CD8-positive, alpha-beta T cell (primary cell): ENCODE measurements at regions of chr19 and their contacts with region 1.

Region 1: GRCh38 chr19:6516659-6517291 is 14.1 kb upstream of the TNFSF9 start:
- DNase-seq: peak; percentile 80 to 97 (median 91)
- ATAC-seq: peak; percentile 85
- H3K4me3 ChIP-seq: peak overlapping the region; percentile 78
- H3K4me3 Mint-ChIP-seq: peak overlapping the region; percentile 90
- H3K27ac ChIP-seq: peak overlapping the region in 1 of 2 experiments; percentile 52
- H3K27ac Mint-ChIP-seq: peak overlapping the region; percentile 33
- H3K4me1 ChIP-seq: peaks cover 26% of the 10 kb centered on the region
- H3K4me1 Mint-ChIP-seq: peaks cover 31% of the 10 kb centered on the region
- H3K27me3 ChIP-seq: no peaks in the 10 kb centered on the region
- H3K27me3 Mint-ChIP-seq: no peaks in the 10 kb centered on the region
- CTCF ChIP-seq: peak; percentile 85

Region 2: GRCh38 chr19:6424939-6425731 is 91.6 kb before region 1 on chr19:
- CTCF ChIA-PET with region 1: no interaction called
- POLR2A ChIA-PET with region 1: no interaction called
- intact Hi-C with region 1: no loop called
- DNase-seq: peak; percentile 97 to 100 (median 98)
- ATAC-seq: peak; percentile 82
- H3K4me3 ChIP-seq: peak overlapping the region; percentile 7 to 48
- H3K4me3 Mint-ChIP-seq: peak overlapping the region; percentile 78
- H3K27ac ChIP-seq: peak overlapping the region; percentile 39 to 92
- H3K27ac Mint-ChIP-seq: peak overlapping the region; percentile 93
- H3K4me1 ChIP-seq: peaks cover 35% of the 10 kb centered on the region
- H3K4me1 Mint-ChIP-seq: peaks cover 37% of the 10 kb centered on the region
- H3K27me3 ChIP-seq: no peaks in the 10 kb centered on the region
- H3K27me3 Mint-ChIP-seq: no peaks in the 10 kb centered on the region
- CTCF ChIP-seq: no peak

Region 3: DNA sequence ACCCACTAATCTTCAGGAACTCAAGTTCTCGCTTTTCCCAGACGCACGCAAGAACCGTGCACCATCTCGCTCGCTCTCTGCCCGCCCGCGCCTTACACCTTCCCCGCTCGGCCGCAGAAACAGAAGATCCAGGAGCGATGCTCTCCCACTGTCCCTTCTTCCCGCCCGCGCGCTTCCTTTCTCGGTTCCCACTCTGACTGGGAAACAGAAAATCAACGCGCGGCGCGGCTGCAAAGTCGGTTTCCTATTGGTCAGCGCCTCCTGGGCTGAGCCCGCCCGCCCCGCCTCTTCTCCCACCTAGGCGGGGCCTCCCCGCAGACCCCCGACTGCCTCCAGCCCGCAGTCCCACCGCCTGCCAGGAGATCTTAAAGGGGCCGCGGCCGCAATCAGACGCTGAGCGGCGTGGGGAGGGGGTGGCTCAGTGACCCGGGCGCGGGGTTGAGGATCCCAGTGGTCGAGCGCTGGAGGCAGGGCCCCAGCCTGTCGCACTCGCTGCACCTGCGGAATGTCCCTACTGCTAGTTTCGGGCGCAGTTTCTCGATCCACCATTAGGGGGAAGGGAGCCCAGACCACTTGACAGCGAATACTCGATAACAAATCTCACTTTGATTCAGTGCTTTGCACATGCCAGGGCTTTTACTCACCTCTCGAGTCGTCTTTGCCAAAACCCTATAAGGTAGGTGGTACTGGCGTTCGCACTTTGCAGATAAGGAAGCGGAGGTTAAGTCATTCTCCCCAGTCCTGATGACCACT is 56.5 kb before region 1 on chr19:
- CTCF ChIA-PET with region 1: no interaction called
- POLR2A ChIA-PET with region 1: interaction called, 4 read pairs
- intact Hi-C with region 1: loop called in 1 of 2 experiments (anchors 1 kb)
- DNase-seq: peak; percentile 93 to 98 (median 96)
- ATAC-seq: peak; percentile 85
- H3K4me3 ChIP-seq: peak overlapping the region; percentile 73 to 87
- H3K4me3 Mint-ChIP-seq: peak overlapping the region; percentile 94
- H3K27ac ChIP-seq: peak overlapping the region; percentile 62 to 69
- H3K27ac Mint-ChIP-seq: peak overlapping the region; percentile 81
- H3K4me1 ChIP-seq: peaks cover 20% of the 10 kb centered on the region
- H3K4me1 Mint-ChIP-seq: peaks cover 32% of the 10 kb centered on the region
- H3K27me3 ChIP-seq: peaks cover 0 to 3% of the 10 kb centered on the region in 2 experiments
- H3K27me3 Mint-ChIP-seq: no peaks in the 10 kb centered on the region
- CTCF ChIP-seq: peak; percentile 54

Region 4: DNA sequence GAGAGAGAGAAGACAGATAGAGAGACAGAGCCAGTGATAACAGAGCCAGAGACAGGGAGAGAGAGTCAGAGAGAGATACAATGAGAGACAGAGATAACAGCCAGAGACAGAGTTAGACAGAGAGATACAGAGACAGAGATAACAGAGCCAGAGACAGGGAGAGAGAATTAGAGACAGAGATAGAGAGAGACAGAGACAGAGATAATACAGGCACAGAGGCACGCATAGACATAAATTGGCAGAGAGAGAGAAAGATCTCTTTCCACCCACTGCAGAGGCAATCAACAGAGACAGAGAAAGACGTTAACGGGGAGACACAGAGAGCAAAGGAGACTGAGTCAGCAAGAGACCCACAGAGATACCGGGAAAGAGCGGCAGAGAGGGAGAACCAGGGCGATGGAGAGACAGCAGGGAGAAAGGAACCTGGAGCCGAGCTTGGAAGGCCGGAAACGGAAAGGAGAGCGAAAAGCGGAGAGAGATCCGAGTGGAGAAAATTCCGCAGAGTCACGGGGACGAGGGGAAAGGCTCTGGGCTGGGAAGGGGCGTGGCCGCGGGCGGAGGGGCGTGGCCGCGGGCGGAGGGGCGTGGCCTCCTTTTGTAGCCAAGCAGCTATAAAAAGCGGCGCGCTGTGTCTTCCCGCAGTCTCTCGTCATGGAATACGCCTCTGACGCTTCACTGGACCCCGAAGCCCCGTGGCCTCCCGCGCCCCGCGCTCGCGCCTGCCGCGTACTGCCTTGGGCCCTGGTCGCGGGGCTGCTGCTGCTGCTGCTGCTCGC is 13.8 kb after region 1 on chr19 and contains the start of gene TNFSF9:
- CTCF ChIA-PET with region 1: interaction called, 4 read pairs
- POLR2A ChIA-PET with region 1: no interaction called
- intact Hi-C with region 1: loop called in 1 of 2 experiments (anchors 2 kb)
- DNase-seq: peak; percentile 60 to 90 (median 82)
- ATAC-seq: peak; percentile 78
- H3K4me3 ChIP-seq: peak within 1 kb of the TSS; percentile 60 to 67
- H3K4me3 Mint-ChIP-seq: peak within 1 kb of the TSS; percentile 88
- H3K27ac ChIP-seq: peak within 1 kb of the TSS in 1 of 2 experiments; percentile 28
- H3K27ac Mint-ChIP-seq: peak within 1 kb of the TSS; percentile 62
- H3K4me1 ChIP-seq: peaks cover 31% of the 10 kb centered on the region
- H3K4me1 Mint-ChIP-seq: peaks cover 32% of the 10 kb centered on the region
- H3K27me3 ChIP-seq: peaks cover 10 to 16% of the 10 kb centered on the region in 2 experiments
- H3K27me3 Mint-ChIP-seq: peaks cover 23% of the 10 kb centered on the region
- CTCF ChIP-seq: no peak
- total RNA-seq, gene TNFSF9: 18.3 to 19.8 TPM

Region 5: DNA sequence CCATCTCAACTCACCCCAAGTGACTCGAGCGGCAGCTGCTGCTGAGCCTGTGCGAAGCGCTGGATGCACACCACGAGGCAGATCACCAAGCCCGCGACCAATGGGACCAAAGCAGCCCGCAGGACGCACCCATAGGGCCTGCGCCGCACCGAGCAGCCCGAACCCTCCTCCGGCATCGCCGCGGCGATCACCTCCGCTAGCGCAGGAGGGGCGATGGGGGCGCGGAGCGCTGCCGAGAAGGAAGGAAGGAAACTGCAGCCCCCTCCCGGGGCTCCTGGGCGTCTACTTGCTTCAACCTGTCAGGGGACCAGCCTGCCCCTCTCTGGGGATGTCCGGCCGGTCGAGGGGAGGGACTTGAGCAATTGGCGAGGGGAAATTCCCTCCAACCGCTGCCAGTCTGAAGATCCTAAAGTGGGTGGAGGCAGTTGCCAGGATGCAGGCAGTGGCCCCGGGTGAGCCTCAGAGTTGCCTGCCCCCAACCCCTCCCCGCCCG is 74.1 kb after region 1 on chr19 and contains the start of gene CD70:
- CTCF ChIA-PET with region 1: interaction called, 3 read pairs
- POLR2A ChIA-PET with region 1: interaction called, 3 read pairs
- intact Hi-C with region 1: loop called in 1 of 2 experiments (anchors 1 kb)
- DNase-seq: peak; percentile 6 to 84 (median 41)
- ATAC-seq: peak; percentile 62
- H3K4me3 ChIP-seq: peak within 1 kb of the TSS; percentile 35 to 55
- H3K4me3 Mint-ChIP-seq: peak within 1 kb of the TSS; percentile 77
- H3K27ac ChIP-seq: peak within 1 kb of the TSS in 1 of 2 experiments; percentile 31
- H3K27ac Mint-ChIP-seq: no peak within 1 kb of the TSS
- H3K4me1 ChIP-seq: peaks cover 48% of the 10 kb centered on the region
- H3K4me1 Mint-ChIP-seq: peaks cover 53% of the 10 kb centered on the region
- H3K27me3 ChIP-seq: peaks cover 23 to 36% of the 10 kb centered on the region in 2 experiments
- H3K27me3 Mint-ChIP-seq: peaks cover 60% of the 10 kb centered on the region
- CTCF ChIP-seq: no peak
- total RNA-seq, gene CD70: 1.7 to 1.9 TPM

Region 6: DNA sequence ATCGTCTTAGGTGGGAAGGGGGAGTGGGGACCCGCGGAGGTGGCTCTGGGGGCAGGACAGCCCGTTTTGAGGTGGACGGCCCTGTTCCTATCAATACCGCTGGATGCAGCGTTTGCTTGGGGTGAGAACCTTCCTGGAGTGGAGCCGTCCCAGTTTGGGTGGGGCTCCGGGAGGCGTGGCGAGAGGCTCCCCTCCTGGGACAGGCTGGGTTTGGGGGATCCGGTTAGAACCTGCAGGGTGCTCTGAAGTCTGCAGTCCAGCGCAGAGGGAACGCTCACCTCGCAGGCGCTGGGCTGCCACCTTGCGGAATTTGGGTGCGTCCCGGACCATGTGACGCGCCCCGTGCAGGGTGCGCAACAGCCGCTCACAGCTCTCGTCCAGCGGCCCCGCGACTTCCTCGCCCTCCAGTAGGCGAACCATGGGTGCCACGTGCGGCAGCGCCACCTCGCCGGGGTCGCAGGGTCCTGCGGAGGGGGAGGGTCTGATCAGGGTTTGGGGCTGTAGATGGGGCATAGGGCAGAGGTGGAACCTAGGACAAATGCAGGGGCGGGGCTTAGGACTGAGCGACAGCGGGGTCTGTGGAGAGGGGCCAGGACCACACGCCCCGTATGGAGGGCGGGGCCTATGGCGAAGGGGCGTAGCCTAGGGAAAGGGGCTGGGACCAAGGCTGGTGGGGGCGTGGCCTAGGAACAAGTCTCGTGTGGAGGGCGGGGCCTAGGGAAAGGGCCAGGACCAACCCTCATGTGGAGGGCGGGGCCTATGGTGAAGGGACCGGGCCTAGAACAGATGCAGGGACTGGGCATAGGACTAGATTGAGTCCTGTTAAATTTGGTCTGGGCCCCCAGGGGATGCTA is 236.6 kb after region 1 on chr19:
- CTCF ChIA-PET with region 1: interaction called, 4 read pairs
- POLR2A ChIA-PET with region 1: no interaction called
- intact Hi-C with region 1: loop called (anchors 5 kb)
- DNase-seq: peak; percentile 51 to 89 (median 73)
- ATAC-seq: peak; percentile 90
- H3K4me3 ChIP-seq: peak overlapping the region; percentile 42 to 59
- H3K4me3 Mint-ChIP-seq: peak overlapping the region; percentile 76
- H3K27ac ChIP-seq: peak overlapping the region; percentile 35 to 40
- H3K27ac Mint-ChIP-seq: peak overlapping the region; percentile 81
- H3K4me1 ChIP-seq: peaks cover 4% of the 10 kb centered on the region
- H3K4me1 Mint-ChIP-seq: peaks cover 12% of the 10 kb centered on the region
- H3K27me3 ChIP-seq: no peaks in the 10 kb centered on the region
- H3K27me3 Mint-ChIP-seq: no peaks in the 10 kb centered on the region
- CTCF ChIP-seq: peak; percentile 47